Head of caudate nucleus (tissue), 42 donors: ENCODE measurements at regions of chr9 and their contacts with region 1.

Region 1: DNA sequence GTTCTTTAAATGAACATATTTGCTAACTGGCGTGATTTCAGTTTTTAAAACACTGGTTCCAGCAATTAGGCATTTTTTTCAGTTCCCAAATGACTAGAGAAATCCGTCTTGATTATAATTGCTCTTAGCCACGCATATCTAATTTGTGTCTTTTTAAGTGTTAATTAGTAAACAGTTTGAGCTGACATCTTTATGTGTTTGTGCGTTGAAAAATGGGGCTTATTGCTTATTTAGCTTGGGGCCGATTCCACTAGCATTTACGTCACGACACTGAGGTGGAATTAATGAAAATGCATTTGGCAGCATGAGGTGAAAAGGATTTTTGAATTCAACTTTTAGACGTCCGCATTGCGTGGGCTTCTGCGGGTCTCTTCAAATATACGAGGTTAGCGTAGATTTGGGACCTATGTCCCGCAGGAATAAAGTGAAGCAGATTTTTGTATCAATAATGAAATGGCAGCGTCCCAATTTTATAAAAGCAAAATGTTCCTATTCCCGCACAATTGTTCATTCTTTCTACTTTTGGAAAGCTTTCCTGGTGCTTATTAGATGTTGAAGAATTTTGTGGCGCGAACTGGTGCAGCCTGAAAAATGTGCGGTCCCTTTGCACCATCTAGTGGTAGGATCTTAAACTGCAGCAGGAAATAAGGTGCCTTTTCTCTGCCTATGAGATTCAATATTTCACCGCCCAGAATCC is 122.7 kb upstream of the LMX1B start:
- DNase-seq: peak in 31 of 42 donors; percentile 42 to 91 (median 76)

Region 2: GRCh38 chr9:125407974-125408900 is 1082.8 kb before region 1 on chr9:
- intact Hi-C with region 1: loop called (anchors 10 kb)
- DNase-seq: peak; percentile 39 to 93 (median 84)

Region 3: DNA sequence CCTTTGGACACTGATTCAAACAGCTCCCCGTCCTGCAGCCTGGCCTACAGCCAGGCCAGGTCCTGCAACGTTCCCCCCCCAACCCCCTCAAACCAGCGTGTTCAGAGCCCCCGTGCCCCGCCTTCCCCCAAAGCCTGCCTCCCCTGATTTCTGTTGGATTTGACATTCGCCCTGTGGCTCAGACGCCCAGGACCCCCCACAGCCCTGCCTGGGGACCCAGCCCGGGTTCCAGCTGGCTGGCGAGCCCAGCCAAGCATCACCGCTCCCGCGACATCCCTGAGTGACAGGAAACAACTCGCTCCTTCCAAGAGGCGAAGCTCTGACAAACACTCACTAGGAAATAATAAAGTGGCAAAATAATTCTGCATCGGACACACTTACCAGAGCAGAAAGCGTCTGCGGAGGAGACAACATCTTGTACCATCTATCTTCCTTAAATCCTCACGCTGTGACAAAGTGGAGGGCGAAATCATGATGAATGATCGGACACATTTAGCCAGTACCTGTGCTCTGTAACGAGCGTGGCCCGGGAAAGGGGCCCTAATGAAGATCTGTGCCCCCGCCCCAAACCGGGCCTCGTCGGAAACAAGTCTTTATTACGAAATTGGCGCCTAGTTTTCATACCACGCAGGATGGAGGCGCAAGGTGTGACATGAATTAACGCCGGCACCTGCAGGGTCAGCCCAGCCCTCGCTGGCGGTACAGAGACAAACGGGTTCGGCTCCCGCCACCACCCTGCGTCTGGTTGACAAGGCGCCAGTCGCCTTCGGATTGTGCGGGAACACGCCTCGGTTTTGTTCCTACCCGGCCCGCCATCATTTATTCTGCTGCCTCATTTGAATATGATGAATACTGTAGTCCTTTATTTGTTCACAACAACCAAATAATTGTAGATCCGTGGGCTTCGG is 255.4 kb before region 1 on chr9:
- intact Hi-C with region 1: loop called (anchors 10 kb)
- DNase-seq: no peak

Region 4: GRCh38 chr9:126398403-126399058 is 92.5 kb before region 1 on chr9:
- intact Hi-C with region 1: loop called (anchors 5 kb)
- DNase-seq: peak; percentile 80 to 96 (median 90)